Right ventricle myocardium superior (tissue), 1 donor: ENCODE measurements at regions of chr20 and their contacts with region 1.

Region 1: DNA sequence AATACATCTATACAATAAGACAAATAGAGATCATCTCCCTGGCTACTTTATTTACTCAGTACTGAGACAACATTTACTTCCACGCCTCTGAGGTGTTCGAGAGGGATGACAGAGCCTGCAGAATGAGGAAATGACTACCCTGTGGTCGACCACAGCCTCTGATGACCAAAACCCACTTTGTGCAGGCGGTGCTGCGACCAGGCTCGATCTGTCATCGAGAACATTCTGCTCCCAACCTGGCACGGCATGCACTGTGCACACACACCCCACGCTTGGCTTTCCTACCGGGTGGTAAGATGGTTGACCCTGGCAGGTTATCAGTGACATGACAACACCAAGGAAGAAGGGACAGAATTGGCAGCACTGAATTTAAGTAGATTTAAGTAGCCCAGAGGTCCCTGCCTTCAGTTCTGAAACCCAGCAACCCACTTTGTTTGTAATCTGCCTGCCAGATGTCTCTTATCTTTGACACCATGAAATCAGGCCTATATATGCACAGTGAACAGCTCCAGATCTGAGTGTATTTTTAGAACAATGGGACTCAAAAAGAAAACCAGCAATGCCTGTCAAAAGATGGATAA is 42.6 kb downstream of the TTI1 start:
- DNase-seq: peak; percentile 75
- ATAC-seq: peak; percentile 64

Region 2: GRCh38 chr20:37564388-37565133 is 426.1 kb before region 1 on chr20:
- intact Hi-C with region 1: loop called (anchors 10 kb)
- DNase-seq: peak; percentile 58
- ATAC-seq: peak; percentile 79

Region 3: GRCh38 chr20:37758332-37758731 is 232.3 kb before region 1 on chr20:
- intact Hi-C with region 1: loop called (anchors 10 kb)
- DNase-seq: peak; percentile 41
- ATAC-seq: peak; percentile 51

Region 4: GRCh38 chr20:37925265-37926165 is 65.1 kb before region 1 on chr20:
- intact Hi-C with region 1: no loop called
- DNase-seq: no peak
- ATAC-seq: no peak